Activated B cell treated with CpG ODN at 0.5 μM for 24 hours (primary cell): ENCODE measurements at regions of chr3 and their contacts with region 1.

Region 1: GRCh38 chr3:53891497-53892285 is at the start of gene SELENOK:
- DNase-seq: peak; percentile 88
- ATAC-seq: peak; percentile 95
- H3K4me3 Mint-ChIP-seq: peak within 1 kb of the TSS; percentile 93
- H3K27ac Mint-ChIP-seq: peak within 1 kb of the TSS; percentile 97
- H3K4me1 Mint-ChIP-seq: peaks cover 34% of the 10 kb centered on the region
- H3K27me3 Mint-ChIP-seq: peaks cover 12% of the 10 kb centered on the region
- CTCF ChIP-seq: no peak
- total RNA-seq, gene SELENOK: 29.8 and 43.3 TPM in 2 replicates

Region 2: GRCh38 chr3:53347261-53348064 is 544.2 kb before region 1 on chr3 and contains the start of gene DCP1A:
- CTCF ChIA-PET with region 1: no interaction called
- POLR2A ChIA-PET with region 1: interaction called, 15 read pairs
- intact Hi-C with region 1: loop called (anchors 1 kb)
- DNase-seq: peak; percentile 98
- ATAC-seq: peak; percentile 95
- H3K4me3 Mint-ChIP-seq: peak within 1 kb of the TSS; percentile 98
- H3K27ac Mint-ChIP-seq: peak within 1 kb of the TSS; percentile 95
- H3K4me1 Mint-ChIP-seq: peaks cover 30% of the 10 kb centered on the region
- H3K27me3 Mint-ChIP-seq: no peaks in the 10 kb centered on the region
- CTCF ChIP-seq: no peak
- total RNA-seq, gene DCP1A: 35.1 and 39.3 TPM in 2 replicates

Region 3: GRCh38 chr3:53748512-53749271 is 143.0 kb before region 1 on chr3:
- CTCF ChIA-PET with region 1: no interaction called
- POLR2A ChIA-PET with region 1: interaction called, 18 read pairs
- intact Hi-C with region 1: loop called (anchors 1 kb)
- DNase-seq: peak; percentile 27
- ATAC-seq: peak; percentile 81
- H3K4me3 Mint-ChIP-seq: peak overlapping the region; percentile 72
- H3K27ac Mint-ChIP-seq: peak overlapping the region; percentile 94
- H3K4me1 Mint-ChIP-seq: peaks cover 68% of the 10 kb centered on the region
- H3K27me3 Mint-ChIP-seq: no peaks in the 10 kb centered on the region
- CTCF ChIP-seq: no peak